Naive thymus-derived CD8-positive, alpha-beta T cell (primary cell): ENCODE measurements at regions of chr2 and their contacts with region 1.

Region 1: DNA sequence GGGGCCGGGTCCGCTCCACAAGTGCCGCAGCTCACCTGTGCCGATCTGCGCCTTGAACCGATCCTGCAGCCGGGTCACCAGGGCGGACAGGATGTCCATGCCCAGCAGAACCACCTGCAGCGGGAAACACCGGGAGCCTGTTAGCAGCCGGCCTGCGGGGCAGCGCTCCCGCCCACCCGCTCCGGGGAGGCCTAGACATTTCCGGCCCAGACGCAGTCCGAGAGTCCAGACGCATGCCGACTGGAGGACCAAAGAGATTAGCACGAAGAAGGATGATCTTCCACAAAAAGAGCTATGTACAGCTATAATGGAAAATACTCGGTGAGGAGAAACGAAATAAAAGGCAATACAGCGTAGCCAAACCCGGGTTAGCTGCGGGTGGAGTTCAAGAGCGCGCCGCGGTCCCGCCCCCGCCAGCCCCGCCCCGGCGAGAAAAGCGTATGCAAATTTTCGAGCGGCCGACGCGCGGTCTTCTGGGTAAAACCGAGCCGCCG is 421 bp upstream of the RNU4ATAC start:
- DNase-seq: peak in 7 of 10 donors; percentile 71 to 90 (median 81)
- ATAC-seq: peak; percentile 70 to 72
- H3K4me3 Mint-ChIP-seq: peak overlapping the region; percentile 88 to 97 (median 95)
- H3K27ac Mint-ChIP-seq: peak overlapping the region; percentile 95 to 100 (median 99)
- H3K4me1 Mint-ChIP-seq: peaks cover 15 to 47% (median 35%) of the 10 kb centered on the region in 4 donors
- H3K27me3 Mint-ChIP-seq: no peaks in the 10 kb centered on the region

Region 2: DNA sequence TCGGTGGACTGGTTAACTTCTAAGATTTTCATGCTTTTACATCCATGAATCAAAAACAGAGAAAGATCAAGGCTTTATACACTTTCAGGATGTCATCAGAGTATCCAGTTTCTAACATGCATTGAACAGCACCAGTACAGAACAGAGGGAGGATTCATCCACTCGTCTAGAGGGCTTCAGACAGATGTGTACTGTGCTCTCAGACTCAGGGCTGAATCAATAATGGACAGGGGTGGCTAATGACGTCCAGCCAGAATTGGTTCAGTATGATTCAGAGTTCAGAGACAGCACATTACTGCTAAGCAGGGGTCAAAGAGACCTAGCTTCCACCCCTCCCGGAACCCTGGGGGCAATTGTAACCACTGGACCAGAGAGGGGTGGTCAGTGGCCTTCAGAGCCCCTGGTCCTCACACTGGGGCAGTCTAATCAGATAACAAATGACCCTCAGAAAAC is 37.7 kb after region 1 on chr2:
- POLR2A ChIA-PET with region 1: no interaction called
- DNase-seq: no peak
- ATAC-seq: no peak
- H3K4me3 Mint-ChIP-seq: no peak overlapping the region
- H3K27ac Mint-ChIP-seq: peak overlapping the region in 1 of 10 donors; percentile 23
- H3K4me1 Mint-ChIP-seq: peaks cover 28 to 65% (median 52%) of the 10 kb centered on the region in 4 donors
- H3K27me3 Mint-ChIP-seq: no peaks in the 10 kb centered on the region

Region 3: DNA sequence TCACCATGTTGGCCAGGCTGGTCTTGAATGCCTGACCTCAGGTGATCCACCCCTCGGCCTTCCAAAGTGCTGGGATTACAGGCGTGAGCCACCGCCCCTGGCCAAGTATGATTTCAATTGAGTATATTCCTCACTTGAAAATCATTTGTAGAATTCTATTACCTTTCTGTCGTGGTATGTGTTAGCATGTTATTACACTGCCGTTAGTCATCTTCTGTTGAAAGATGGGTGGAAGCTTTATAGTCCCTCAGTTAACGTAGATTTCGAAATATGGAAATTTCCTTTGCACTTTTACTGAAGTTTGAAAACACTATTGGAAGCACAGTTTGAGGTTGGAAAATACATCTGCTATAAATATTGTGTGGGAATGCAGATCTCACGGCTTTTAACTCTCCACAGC is 191.7 kb after region 1 on chr2:
- POLR2A ChIA-PET with region 1: interaction called, 10 read pairs
- DNase-seq: no peak
- ATAC-seq: no peak
- H3K4me3 Mint-ChIP-seq: no peak overlapping the region
- H3K27ac Mint-ChIP-seq: peak overlapping the region in 1 of 10 donors; percentile 22
- H3K4me1 Mint-ChIP-seq: peaks cover 0 to 6% (median 5%) of the 10 kb centered on the region in 4 donors
- H3K27me3 Mint-ChIP-seq: no peaks in the 10 kb centered on the region

Region 4: DNA sequence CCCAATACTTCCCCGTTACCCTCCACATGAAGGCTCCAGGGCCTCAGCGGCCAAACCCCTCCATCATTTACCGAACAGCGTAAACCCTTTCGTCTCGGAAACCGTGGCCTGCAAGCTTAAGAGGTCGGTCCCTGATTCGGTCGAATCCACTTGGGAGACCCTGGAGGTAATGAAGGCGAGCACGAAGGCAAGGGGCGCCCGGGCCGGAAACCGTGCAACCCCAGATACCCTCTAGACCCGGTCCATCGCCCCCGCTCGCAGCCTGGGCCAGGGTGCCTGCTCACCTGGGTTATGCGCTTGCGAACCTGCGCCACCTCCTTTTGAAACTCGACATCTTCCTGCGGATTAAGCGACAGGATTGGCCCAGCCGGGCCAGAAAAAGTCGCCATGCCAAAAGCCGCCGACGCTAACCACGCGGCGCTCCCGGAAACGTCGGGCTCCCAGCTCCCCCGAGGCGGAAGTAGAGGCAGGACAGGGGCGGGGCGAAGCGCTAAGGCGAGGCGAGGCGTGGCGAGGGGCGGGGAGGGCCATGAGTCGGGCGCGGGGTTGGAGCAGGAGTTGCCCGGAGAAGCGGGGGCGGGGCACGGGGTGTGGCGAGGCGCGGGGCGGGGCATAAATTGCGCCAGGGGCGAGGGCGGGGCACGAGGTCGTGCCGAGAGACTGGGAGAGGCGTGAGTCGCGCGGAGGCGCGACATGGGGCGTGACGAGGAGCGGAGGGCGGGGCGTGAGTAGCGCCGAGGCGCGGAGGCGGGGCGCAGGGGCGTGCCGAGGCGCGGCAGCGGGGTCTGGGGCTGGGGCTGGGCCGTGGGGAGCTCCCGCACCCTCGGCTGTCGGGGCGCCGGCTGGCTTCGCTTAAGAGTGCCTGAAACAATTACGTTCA is 206.4 kb after region 1 on chr2 and contains the start of gene NIFK:
- POLR2A ChIA-PET with region 1: interaction called, 35 read pairs
- DNase-seq: peak; percentile 97 to 100 (median 100)
- ATAC-seq: peak; percentile 85 to 86
- H3K4me3 Mint-ChIP-seq: peak within 1 kb of the TSS; percentile 94 to 100 (median 96)
- H3K27ac Mint-ChIP-seq: peak within 1 kb of the TSS; percentile 85 to 99 (median 97)
- H3K4me1 Mint-ChIP-seq: peaks cover 16 to 60% (median 54%) of the 10 kb centered on the region in 4 donors
- H3K27me3 Mint-ChIP-seq: no peaks in the 10 kb centered on the region
- polyA plus RNA-seq, gene NIFK: 62.8 to 88.6 (median 77.1) TPM